ENCODE measurements at regions of chr2 and their contacts with region 1.

Region 1: DNA sequence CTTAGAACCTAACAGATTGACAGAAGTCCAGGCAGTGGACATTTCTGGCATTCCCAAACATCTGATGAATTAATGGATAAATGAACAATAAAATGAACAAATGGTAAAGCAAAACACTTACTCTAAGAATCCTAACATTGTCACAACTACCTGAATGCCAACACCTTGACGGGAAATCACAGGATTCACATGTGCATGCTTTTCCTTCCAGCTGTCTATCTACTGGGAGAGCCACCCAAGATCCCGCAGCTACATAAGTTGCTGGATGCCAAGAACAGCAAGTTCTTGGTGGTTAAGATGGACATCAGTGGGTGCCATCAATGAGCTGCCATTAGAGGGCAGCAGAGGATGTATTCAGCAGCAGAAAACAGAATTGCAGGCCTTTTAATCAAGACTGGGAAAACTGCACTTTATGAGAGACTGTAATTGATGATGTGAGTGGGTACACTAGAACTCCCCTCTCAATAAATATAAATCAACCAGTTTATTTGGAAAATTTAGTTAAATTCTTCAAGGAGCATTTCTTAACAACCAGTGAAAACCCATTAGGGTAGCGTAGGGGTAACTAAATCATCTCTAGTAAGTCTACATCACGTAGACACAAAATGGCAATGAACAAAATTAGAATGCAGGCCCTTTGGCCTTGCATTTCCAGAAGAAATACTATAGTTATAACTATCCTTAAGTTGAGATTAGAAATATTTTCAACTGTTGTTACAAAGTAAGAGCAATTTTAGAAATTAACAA is 45.6 kb downstream of the SESTD1 start:
- DNase-seq: peak; percentile 71
- H3K4me3 ChIP-seq: no peak overlapping the region
- H3K27ac ChIP-seq: no peak overlapping the region
- H3K27me3 ChIP-seq: no peaks in the 10 kb centered on the region
- CTCF ChIP-seq: peak; percentile 96

Region 2: DNA sequence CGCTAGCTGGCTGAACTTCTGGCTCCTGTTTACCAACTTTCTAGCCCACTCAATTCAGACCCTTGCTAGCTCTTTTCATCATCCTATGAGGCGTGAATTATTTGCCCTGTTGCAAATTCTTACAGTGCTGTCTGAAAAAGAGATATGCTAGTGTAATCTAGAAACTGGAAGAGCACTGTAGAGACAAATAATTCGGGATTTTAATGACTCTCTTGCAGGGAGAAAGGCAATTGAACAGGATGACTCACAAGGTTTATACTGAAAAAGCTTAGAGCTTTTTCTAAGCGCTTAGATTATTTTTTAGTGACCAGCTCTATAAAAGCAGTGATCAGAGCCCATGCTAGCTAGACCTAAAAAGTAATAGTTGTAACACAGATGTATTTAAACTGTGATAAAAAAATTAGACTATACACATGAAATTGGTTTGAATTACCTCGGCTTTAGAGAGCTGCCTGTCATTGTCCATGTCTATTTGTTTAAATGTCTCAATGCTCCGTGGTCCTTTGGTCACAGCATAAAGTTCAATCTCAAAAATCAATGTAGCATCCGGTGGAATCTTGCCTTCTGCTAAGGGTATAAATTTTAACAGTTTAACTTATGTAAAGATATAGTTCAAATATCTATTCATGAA is 749.7 kb before region 1 on chr2:
- CTCF ChIA-PET with region 1: no interaction called
- POLR2A ChIA-PET with region 1: no interaction called
- DNase-seq: no peak
- H3K4me3 ChIP-seq: no peak overlapping the region
- H3K27ac ChIP-seq: no peak overlapping the region
- H3K27me3 ChIP-seq: no peaks in the 10 kb centered on the region
- CTCF ChIP-seq: no peak

Region 3: GRCh38 chr2:179031731-179032408 is 187.2 kb before region 1 on chr2:
- CTCF ChIA-PET with region 1: no interaction called
- POLR2A ChIA-PET with region 1: no interaction called
- DNase-seq: no peak
- H3K4me3 ChIP-seq: no peak overlapping the region
- H3K27ac ChIP-seq: no peak overlapping the region
- H3K27me3 ChIP-seq: no peaks in the 10 kb centered on the region
- CTCF ChIP-seq: no peak

Region 4: DNA sequence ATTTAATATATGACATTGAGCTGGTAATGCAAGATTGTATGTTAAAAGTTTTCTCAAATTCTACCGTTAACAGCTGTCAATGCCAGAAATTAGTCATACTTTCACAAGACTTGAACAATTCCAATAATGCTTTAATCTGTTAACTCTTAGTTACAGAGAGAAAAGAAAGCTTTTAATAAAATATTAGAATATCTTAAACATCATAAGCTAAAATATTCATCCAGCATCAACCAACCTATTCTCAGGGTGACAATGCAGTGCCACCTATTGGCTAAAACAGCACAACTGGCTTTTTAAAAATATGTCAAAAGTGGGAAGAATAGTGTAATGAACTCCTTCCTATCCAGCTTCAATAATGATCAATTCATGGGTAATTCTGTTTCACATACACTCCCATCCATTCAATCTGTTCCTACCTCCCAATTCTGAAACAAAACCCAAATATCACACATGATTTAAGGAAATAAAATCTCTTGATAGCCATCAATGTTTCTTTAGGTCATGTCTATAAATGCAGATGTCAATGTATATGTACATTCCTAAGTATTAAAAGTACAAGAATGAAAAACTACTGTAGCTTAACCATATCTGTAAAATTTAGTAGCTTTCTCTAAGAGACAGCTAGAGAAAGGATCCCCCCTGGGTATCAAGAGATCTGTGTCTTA is 89.3 kb before region 1 on chr2:
- CTCF ChIA-PET with region 1: no interaction called
- POLR2A ChIA-PET with region 1: no interaction called
- DNase-seq: no peak
- H3K4me3 ChIP-seq: no peak overlapping the region
- H3K27ac ChIP-seq: no peak overlapping the region
- H3K27me3 ChIP-seq: no peaks in the 10 kb centered on the region
- CTCF ChIP-seq: peak; percentile 60

Region 5: DNA sequence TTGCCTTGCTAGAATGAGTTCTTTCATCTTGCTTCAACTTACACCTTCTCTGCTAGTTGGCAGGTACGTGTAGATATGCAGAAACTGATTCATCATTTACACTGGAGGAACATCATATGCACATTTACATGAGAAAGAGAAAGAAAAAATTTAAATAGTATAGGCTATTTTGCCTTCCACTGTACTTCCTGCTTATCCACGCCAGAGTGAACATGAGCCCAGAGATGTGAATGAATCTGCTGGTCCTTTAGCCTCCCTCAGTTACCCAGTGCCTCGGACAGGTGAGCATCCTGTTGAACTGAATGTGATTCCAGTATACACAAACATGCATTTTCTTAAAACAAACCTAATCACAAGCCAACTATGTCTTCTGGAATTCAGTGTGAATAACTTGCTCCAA is 38.0 kb before region 1 on chr2:
- CTCF ChIA-PET with region 1: interaction called, 10 read pairs
- POLR2A ChIA-PET with region 1: no interaction called
- DNase-seq: no peak
- H3K4me3 ChIP-seq: no peak overlapping the region
- H3K27ac ChIP-seq: no peak overlapping the region
- H3K27me3 ChIP-seq: no peaks in the 10 kb centered on the region
- CTCF ChIP-seq: no peak

Region 6: GRCh38 chr2:179239195-179239594 is 20.2 kb after region 1 on chr2:
- CTCF ChIA-PET with region 1: interaction called, 12 read pairs
- POLR2A ChIA-PET with region 1: no interaction called
- DNase-seq: no peak
- H3K4me3 ChIP-seq: no peak overlapping the region
- H3K27ac ChIP-seq: no peak overlapping the region
- H3K27me3 ChIP-seq: no peaks in the 10 kb centered on the region
- CTCF ChIP-seq: no peak